Activated CD4-positive, alpha-beta T cell treated with anti-CD3 and anti-CD28 coated beads, Interleukin-2, amount 10 ng/mL, durations not matched to agents 24 days and 14 days (primary cell): ENCODE measurements at regions of chr9 and their contacts with region 1.

Region 1: DNA sequence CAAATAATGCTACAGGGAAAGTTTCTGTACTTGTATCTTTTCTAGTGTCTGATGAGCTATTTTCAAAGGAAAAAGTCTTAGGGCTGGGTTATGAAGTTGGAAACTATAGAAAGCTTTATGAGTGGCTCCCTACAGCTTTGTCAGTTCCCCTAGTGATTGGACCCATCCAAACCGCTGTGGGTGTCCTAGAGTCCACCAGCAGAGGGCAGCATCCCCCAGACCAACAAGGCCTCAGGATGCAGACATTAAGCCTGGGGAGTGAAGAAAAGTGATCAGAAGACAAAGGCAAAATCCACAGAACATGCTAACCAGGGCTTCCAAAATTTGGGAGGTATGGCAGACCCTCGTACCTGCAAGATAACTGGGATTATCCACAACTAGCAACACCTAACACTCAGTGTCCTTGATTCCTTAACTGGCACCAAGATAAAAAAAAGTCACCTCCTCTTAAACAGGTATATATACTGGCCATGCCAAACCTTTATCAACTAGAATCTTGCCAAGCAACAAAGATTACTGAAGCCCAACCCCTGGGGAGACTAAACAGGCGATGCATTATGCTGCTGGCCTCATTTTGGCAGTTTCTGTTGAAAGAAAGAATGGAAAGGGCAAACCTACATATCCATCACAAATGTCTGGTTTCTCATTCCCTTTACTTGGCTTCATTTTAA is 110.4 kb upstream of the NR5A1 start:
- DNase-seq: peak; percentile 91
- H3K4me3 Mint-ChIP-seq: no peak overlapping the region
- H3K27ac Mint-ChIP-seq: no peak overlapping the region
- H3K4me1 Mint-ChIP-seq: no peaks in the 10 kb centered on the region
- H3K27me3 Mint-ChIP-seq: peaks cover 9% of the 10 kb centered on the region

Region 2: GRCh38 chr9:124583128-124583527 is 34.5 kb before region 1 on chr9:
- intact Hi-C with region 1: no loop called
- DNase-seq: no peak
- H3K4me3 Mint-ChIP-seq: no peak overlapping the region
- H3K27ac Mint-ChIP-seq: no peak overlapping the region
- H3K4me1 Mint-ChIP-seq: no peaks in the 10 kb centered on the region
- H3K27me3 Mint-ChIP-seq: no peaks in the 10 kb centered on the region

Region 3: GRCh38 chr9:124708633-124709291 is 91.2 kb after region 1 on chr9:
- intact Hi-C with region 1: loop called (anchors 1 kb)
- DNase-seq: peak; percentile 18
- H3K4me3 Mint-ChIP-seq: no peak overlapping the region
- H3K27ac Mint-ChIP-seq: no peak overlapping the region
- H3K4me1 Mint-ChIP-seq: peaks cover 2% of the 10 kb centered on the region
- H3K27me3 Mint-ChIP-seq: peaks cover 25% of the 10 kb centered on the region

Region 4: GRCh38 chr9:124754289-124754688 is 136.7 kb after region 1 on chr9:
- intact Hi-C with region 1: loop called (anchors 5 kb)
- DNase-seq: no peak
- H3K4me3 Mint-ChIP-seq: no peak overlapping the region
- H3K27ac Mint-ChIP-seq: no peak overlapping the region
- H3K4me1 Mint-ChIP-seq: peaks cover 5% of the 10 kb centered on the region
- H3K27me3 Mint-ChIP-seq: peaks cover 63% of the 10 kb centered on the region

Region 5: GRCh38 chr9:124764774-124765438 is 147.3 kb after region 1 on chr9:
- intact Hi-C with region 1: loop called (anchors 2 kb)
- DNase-seq: no peak
- H3K4me3 Mint-ChIP-seq: no peak overlapping the region
- H3K27ac Mint-ChIP-seq: no peak overlapping the region
- H3K4me1 Mint-ChIP-seq: peaks cover 12% of the 10 kb centered on the region
- H3K27me3 Mint-ChIP-seq: peaks cover 82% of the 10 kb centered on the region